Ovary (tissue), 10 donors: ENCODE measurements at regions of chr4 and their contacts with region 1.

Region 1: DNA sequence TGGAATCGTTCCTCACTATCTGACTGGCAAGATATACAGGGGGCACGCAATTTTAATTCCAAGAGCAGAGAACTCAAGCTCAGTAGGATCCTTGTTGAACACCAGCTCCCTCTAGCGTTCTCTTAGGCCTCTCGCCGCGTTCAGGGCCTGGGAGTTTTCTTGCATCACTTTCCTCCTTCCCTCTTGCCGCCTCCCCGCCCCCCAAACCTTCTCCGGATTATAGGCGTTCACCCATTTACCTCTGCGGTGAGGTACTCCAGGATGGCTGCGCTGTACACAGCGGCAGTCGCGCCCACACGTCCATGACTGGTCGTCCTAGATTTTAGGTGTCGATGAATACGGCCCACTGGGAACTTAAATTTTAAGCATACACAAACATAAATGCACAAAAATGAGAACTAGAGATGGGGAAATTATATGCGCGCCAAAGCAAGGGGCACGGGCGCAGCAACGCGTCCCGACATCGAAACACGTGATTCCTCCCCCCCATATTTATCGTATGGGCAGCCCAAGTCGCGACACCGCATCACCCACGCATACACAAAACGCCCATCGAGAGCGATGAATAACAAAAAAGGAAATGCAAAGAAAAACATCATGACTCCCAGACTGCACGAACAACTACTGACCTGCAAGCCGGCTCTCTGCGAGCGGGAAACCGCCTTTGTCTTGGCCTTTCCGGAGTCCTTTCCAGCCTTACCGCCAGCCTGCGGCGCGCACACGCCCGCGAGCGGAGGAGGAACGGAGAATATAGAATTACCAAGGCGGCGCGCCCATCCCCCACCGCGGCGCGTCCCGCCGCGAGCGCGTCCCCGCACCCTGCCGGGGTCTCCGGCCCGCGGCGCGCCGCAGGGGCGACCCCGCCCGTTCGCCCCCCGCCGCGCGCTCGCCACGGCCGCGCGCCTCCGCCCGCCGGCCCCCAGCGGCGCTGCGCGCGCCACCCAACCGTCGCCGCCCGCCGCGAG is 759 bp downstream of the H2AZ1 start:
- DNase-seq: peak; percentile 82 to 92 (median 87)
- H3K4me3 ChIP-seq: peak overlapping the region; percentile 80
- H3K27ac ChIP-seq: peak overlapping the region; percentile 80 to 89
- H3K4me1 ChIP-seq: peaks cover 3% of the 10 kb centered on the region
- H3K27me3 ChIP-seq: no peaks in the 10 kb centered on the region
- CTCF ChIP-seq: peak; percentile 75 to 81 (median 81)
- EP300 ChIP-seq: no peak
- POLR2A ChIP-seq: peak; percentile 9

Region 2: DNA sequence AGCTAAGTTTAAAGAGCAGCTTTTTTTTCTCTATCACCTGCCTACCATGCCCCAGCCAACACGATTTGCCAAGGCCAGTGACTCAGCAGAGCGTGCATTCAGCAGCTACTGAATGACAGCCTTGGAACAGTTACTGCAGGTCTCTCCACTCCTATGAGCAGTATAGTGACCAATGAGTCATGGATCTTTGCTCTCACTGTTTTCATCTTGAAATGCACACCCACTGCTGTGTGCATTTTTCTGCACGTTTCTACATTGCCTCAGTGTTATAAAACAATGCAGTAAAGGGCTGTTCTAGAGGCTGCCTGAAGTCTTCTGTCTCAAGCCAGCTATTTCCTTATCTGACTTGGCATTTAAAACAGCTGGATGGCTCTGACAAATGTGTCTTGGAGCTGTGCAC is 225.7 kb before region 1 on chr4:
- intact Hi-C with region 1: loop called in 2 of 4 experiments (anchors 10 kb)
- DNase-seq: peak; percentile 42 to 66 (median 46)
- H3K4me3 ChIP-seq: no peak overlapping the region
- H3K27ac ChIP-seq: peak overlapping the region in 1 of 2 donors; percentile 57
- H3K4me1 ChIP-seq: peaks cover 9% of the 10 kb centered on the region
- H3K27me3 ChIP-seq: no peaks in the 10 kb centered on the region
- CTCF ChIP-seq: no peak
- EP300 ChIP-seq: no peak
- POLR2A ChIP-seq: no peak

Region 3: DNA sequence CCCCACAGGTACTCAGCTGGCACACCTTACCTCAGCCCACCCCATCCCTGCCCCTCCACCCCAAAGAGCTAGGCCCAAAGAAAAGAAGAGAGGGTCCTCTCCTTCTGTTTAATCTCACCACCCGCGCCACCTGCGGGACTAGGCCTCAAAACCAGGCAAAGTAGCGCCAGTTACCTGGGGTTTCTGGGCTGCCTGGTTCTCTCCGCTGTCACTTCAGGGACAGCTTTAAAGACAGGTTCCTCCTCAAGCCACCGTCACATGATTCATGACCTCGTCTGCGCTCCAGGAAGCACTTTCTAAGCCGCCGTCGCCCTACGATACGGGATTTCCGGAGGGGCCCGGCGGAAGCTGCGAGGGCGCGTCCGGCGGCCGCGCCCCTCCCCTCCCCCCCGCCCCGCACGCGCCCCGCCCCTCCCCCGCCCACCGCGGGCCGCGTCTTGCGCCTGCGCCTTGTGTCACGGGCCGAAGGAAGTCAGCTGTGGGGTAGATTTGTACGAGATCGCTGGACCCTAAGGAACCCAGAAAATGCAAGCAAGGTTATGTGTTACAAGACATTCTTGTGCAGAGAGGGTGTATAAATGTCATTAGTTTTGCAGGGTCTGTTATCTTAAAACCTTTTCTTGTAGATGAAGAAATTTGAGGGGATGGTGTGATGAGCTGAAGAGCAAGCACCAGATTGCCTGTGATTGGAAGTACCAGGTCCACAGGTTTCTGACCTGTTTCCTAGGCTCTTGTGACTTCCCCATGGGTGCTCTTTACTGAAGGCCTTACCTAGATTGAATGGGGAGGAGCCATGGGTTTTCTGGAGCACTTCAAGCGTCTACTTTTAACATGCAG is 54.9 kb before region 1 on chr4 and contains the start of gene LAMTOR3:
- intact Hi-C with region 1: loop called in 1 of 4 experiments (anchors 2 kb)
- DNase-seq: peak; percentile 87 to 92 (median 89)
- H3K4me3 ChIP-seq: peak within 1 kb of the TSS; percentile 71
- H3K27ac ChIP-seq: peak within 1 kb of the TSS in 1 of 2 donors; percentile 78
- H3K4me1 ChIP-seq: peaks cover 8% of the 10 kb centered on the region
- H3K27me3 ChIP-seq: no peaks in the 10 kb centered on the region
- CTCF ChIP-seq: no peak
- EP300 ChIP-seq: no peak
- POLR2A ChIP-seq: peak; percentile 37
- total RNA-seq, gene LAMTOR3: 36.5 to 52.4 (median 43.7) TPM